Astrocyte of the cerebellum (primary cell): ENCODE measurements at regions of chr1 and their contacts with region 1.

Region 1: GRCh38 chr1:43389326-43390313 is at the starts of genes MED8 and SZT2:
- DNase-seq: peak; percentile 68
- H3K4me3 ChIP-seq: peak within 1 kb of the TSS; percentile 92
- CTCF ChIP-seq: no peak

Region 2: DNA sequence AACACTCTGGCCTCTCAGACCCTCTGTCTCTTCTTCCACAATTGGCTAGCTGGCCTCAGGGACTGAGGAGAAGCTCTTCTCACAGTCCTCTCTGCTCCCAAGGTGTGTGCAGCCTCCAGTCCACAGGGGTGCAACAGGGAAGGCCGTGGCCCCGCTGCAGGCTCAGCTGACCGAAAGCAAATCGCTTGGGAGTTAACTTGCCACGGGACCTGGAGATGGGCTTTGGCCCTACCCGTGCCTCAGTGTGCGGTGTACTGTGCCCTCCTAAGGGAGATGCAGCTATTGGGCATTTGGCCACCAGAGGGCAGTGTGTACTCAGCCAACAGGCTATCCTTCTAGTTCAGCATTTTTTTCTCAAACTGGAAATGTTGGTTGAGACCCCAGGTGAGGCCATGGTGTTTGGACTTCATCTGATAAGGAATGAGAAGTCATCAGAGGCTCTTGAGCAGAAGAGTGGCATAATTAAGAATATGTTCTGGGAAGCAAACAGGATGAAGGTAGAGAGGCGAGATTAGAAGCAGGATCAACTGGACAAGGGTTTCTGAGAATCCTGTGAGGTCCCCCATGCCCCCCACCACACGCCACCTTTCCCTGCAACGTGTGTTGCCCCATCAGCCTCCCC is 162.4 kb before region 1 on chr1:
- in situ Hi-C with region 1: loop called (anchors 25 kb)
- DNase-seq: peak; percentile 59
- H3K4me3 ChIP-seq: no peak overlapping the region
- CTCF ChIP-seq: peak; percentile 95